MCF 10A (cell line): ENCODE measurements at regions of chr20 and their contacts with region 1.

Region 1: GRCh38 chr20:47379433-47380150 is 23.1 kb upstream of the ZMYND8 start:
- DNase-seq: peak; percentile 63
- H3K4me3 Mint-ChIP-seq: no peak overlapping the region
- H3K27ac Mint-ChIP-seq: no peak overlapping the region
- H3K4me1 Mint-ChIP-seq: peaks cover 14% of the 10 kb centered on the region
- H3K27me3 Mint-ChIP-seq: no peaks in the 10 kb centered on the region
- CTCF ChIP-seq: no peak

Region 2: GRCh38 chr20:46699651-46700359 is 679.8 kb before region 1 on chr20:
- CTCF ChIA-PET with region 1: no interaction called
- POLR2A ChIA-PET with region 1: no interaction called
- intact Hi-C with region 1: no loop called
- DNase-seq: peak; percentile 54
- H3K4me3 Mint-ChIP-seq: no peak overlapping the region
- H3K27ac Mint-ChIP-seq: no peak overlapping the region
- H3K4me1 Mint-ChIP-seq: peaks cover 8% of the 10 kb centered on the region
- H3K27me3 Mint-ChIP-seq: no peaks in the 10 kb centered on the region
- CTCF ChIP-seq: peak; percentile 72

Region 3: DNA sequence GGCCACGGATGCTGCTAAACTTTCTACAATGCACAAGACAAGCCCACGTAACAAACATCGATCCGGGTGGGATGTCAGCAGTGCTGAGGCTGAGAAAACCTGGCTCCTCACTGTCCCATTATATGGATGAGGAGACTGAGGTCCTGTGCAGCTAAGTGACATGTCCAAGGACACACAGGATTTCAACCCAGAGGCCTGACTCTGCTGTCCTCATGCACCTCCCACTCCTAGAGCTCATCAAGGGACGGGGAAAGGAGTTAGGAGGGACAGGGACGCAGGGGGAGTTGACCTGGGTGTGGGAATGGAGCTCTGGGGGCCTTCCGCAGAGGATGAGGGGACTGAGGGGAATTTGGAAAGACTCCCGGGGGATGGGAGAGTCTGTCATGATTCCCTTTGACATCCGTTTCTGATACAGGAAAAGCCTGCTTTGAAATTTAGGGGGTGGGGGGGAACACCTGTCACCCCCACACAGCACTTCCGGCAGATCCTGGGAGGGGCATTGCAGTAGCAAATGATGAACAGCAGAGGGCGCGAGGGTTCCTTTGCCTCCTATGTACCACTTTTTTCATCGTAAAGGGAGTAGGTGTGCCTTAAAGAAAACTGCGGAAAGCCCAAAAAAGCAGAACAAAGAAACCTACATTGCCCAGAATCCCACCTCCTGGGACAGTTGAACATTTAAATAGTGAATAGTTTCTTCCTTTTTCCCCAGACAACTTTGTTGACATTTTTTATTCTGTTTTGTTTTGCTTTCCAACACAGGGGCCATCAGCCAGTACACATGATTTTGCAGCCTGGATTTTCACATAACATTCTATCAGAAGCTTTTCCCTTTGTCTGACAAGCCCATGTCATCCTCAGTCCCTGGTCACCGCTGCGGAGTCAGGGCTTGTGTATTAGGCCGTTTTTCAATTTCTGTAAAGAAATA is 621.6 kb before region 1 on chr20:
- CTCF ChIA-PET with region 1: interaction called, 93 read pairs
- POLR2A ChIA-PET with region 1: interaction called, 5 read pairs
- intact Hi-C with region 1: loop called (anchors 2 kb)
- DNase-seq: peak; percentile 72
- H3K4me3 Mint-ChIP-seq: no peak overlapping the region
- H3K27ac Mint-ChIP-seq: no peak overlapping the region
- H3K4me1 Mint-ChIP-seq: peaks cover under 1% of the 10 kb centered on the region
- H3K27me3 Mint-ChIP-seq: peaks cover 27% of the 10 kb centered on the region
- CTCF ChIP-seq: peak; percentile 93

Region 4: DNA sequence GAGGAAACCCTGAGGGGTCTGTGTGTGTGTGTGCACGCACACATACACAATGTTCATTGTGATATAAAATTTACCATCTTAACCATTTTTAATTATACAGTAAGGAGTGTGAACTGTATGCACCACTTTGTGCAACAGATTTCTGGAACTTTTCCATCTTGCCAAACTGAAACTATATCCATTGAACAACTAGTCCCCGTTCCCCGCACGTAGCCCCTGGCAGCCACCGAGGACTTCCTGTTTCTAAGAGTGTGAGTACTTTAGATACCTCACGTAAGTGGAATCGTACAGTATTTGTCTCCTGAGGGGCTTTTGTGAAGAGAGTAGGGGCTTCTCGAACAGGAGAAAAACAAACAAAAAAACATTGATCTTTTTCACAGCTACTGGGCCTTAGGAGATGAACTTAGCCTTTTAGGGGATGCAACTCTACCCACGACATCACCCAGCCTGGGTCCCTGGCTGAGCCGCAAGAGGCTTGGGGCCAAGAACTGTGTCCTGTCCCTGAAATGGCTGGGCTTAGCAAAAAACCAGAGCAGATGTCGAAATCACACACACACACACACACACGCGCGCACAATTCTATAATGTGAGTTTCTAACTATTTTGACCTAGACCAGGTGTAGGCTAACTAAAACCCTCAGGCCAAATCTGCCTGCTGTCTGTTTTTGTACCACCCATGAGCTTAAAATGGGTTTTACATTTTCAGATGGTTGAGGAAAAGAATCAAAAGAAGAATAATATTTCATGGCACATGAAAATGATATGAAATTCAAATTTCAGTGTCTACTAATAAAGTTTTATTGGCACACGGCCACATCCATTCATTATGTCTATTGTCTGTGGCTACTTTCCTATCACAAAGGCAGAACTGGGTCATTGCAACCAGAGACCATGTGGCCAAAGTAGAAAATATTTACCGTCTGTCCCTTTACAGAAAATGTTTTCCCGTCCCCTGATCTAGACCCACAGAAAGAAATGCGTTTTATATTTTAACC is 340.7 kb before region 1 on chr20:
- CTCF ChIA-PET with region 1: no interaction called
- POLR2A ChIA-PET with region 1: no interaction called
- intact Hi-C with region 1: no loop called
- DNase-seq: no peak
- H3K4me3 Mint-ChIP-seq: no peak overlapping the region
- H3K27ac Mint-ChIP-seq: no peak overlapping the region
- H3K4me1 Mint-ChIP-seq: no peaks in the 10 kb centered on the region
- H3K27me3 Mint-ChIP-seq: no peaks in the 10 kb centered on the region
- CTCF ChIP-seq: no peak

Region 5: GRCh38 chr20:47173596-47174216 is 205.9 kb before region 1 on chr20:
- CTCF ChIA-PET with region 1: no interaction called
- POLR2A ChIA-PET with region 1: no interaction called
- intact Hi-C with region 1: no loop called
- DNase-seq: peak; percentile 3
- H3K4me3 Mint-ChIP-seq: no peak overlapping the region
- H3K27ac Mint-ChIP-seq: no peak overlapping the region
- H3K4me1 Mint-ChIP-seq: no peaks in the 10 kb centered on the region
- H3K27me3 Mint-ChIP-seq: peaks cover 11% of the 10 kb centered on the region
- CTCF ChIP-seq: no peak

Region 6: DNA sequence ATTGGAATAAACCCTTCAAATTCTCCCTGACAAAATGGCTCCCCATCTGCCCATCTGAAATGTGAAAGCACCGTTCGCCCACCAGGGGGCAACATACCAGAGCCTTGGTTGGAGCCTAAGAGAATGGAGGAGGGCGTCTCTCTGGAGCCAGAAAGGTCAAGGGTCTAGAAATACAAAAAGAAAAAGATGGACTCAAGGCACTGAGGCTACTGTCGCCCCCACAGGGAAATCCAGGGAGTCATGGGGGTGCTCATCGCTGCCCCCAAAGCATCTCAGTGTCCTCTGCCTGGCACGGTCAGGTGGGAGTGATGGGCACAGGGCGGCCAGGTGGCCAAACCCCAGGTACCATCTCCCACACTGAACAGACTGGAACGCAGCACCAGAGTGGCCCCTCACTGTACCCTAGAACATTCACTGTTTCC is 159.4 kb before region 1 on chr20:
- CTCF ChIA-PET with region 1: interaction called, 30 read pairs
- POLR2A ChIA-PET with region 1: interaction called, 3 read pairs
- intact Hi-C with region 1: no loop called
- DNase-seq: peak; percentile 54
- H3K4me3 Mint-ChIP-seq: no peak overlapping the region
- H3K27ac Mint-ChIP-seq: no peak overlapping the region
- H3K4me1 Mint-ChIP-seq: peaks cover 5% of the 10 kb centered on the region
- H3K27me3 Mint-ChIP-seq: no peaks in the 10 kb centered on the region
- CTCF ChIP-seq: peak; percentile 41

Region 7: GRCh38 chr20:47281376-47281775 is 98.2 kb before region 1 on chr20:
- CTCF ChIA-PET with region 1: interaction called, 581 read pairs
- POLR2A ChIA-PET with region 1: interaction called, 135 read pairs
- intact Hi-C with region 1: no loop called
- DNase-seq: no peak
- H3K4me3 Mint-ChIP-seq: no peak overlapping the region
- H3K27ac Mint-ChIP-seq: peak overlapping the region; percentile 80
- H3K4me1 Mint-ChIP-seq: peaks cover 26% of the 10 kb centered on the region
- H3K27me3 Mint-ChIP-seq: no peaks in the 10 kb centered on the region
- CTCF ChIP-seq: no peak

Region 8: DNA sequence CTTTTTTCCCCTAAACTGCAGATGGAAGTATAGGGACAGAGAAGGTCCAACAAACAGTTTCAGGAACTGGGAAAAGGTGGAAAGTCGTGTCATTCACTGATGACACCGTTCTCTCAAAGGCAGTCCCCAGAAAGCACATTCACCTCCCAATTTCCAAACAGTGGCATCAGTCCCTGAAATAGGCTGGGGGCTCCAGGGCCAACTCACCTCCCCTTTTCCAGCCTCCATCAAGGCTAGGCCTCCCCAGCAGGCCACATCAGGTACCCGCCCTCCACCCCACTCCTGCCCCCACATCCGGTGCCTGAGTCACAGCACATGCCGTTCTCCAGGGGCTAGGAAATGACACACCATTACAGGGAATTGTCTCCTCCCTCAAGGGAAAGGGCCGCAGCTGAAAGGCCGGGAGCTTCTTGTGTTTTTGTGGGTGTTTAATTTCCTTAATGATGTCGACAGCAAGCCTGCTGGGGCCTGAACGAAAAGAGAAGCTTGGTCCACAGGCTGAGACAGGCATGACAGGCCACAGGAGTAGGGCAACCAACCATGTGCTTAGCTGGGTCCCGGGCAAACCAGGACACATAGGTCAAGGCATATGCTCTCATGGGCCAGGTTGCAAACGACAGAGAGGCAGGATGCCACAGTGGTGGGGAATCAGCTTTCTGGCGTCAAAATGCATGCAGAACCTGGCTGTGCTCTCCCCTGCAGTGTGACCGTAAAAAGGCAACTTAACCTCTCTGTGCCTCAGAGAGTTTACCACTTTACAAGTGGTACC is 62.3 kb before region 1 on chr20:
- CTCF ChIA-PET with region 1: interaction called, 31 read pairs
- POLR2A ChIA-PET with region 1: interaction called, 53 read pairs
- intact Hi-C with region 1: loop called (anchors 5 kb)
- DNase-seq: peak; percentile 100
- H3K4me3 Mint-ChIP-seq: peak overlapping the region; percentile 65
- H3K27ac Mint-ChIP-seq: peak overlapping the region; percentile 94
- H3K4me1 Mint-ChIP-seq: peaks cover 65% of the 10 kb centered on the region
- H3K27me3 Mint-ChIP-seq: no peaks in the 10 kb centered on the region
- CTCF ChIP-seq: no peak

Region 9: DNA sequence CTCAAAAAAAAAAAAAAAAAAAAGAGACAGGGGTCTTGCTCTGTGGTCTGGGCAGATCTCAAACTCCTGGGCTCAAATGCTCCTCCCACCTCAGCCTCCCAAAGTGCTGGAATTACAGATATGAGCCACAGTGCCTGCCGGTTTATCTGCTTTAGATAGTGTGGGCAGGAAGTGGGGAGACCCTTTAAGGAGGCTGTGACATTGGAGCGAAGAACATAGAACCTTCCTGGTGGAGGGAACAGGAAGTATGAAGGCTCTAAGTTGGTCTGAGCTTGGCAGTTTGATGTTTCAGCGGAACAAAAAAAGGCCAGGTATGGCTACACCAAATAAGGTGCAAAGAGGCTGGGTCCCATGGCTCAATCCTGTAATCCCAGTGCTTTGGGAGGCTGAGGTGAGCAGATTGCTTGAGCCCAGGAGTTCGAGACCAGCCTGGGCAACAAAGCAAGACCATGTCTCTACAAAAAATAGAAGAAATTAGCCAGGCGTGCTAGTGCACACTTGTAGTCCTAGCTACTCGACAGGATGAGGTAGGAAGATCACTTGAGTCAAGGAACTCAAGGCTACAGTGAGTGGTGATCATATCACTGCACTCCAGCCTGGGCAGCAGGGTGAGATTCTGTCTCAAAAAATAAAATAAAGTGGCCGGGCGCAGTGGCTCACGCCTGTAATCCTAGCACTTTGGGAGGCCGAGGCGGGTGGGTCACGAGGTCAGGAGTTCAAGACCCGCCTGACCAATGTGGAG is 14.4 kb before region 1 on chr20:
- CTCF ChIA-PET with region 1: interaction called, 82 read pairs
- POLR2A ChIA-PET with region 1: interaction called, 307 read pairs
- intact Hi-C with region 1: no loop called
- DNase-seq: no peak
- H3K4me3 Mint-ChIP-seq: no peak overlapping the region
- H3K27ac Mint-ChIP-seq: no peak overlapping the region
- H3K4me1 Mint-ChIP-seq: peaks cover 24% of the 10 kb centered on the region
- H3K27me3 Mint-ChIP-seq: no peaks in the 10 kb centered on the region
- CTCF ChIP-seq: no peak

Region 10: GRCh38 chr20:47453142-47453782 is 73.7 kb after region 1 on chr20:
- CTCF ChIA-PET with region 1: interaction called, 20 read pairs
- POLR2A ChIA-PET with region 1: interaction called, 9 read pairs
- intact Hi-C with region 1: no loop called
- DNase-seq: peak; percentile 92
- H3K4me3 Mint-ChIP-seq: peak overlapping the region; percentile 45
- H3K27ac Mint-ChIP-seq: peak overlapping the region; percentile 91
- H3K4me1 Mint-ChIP-seq: peaks cover 27% of the 10 kb centered on the region
- H3K27me3 Mint-ChIP-seq: no peaks in the 10 kb centered on the region
- CTCF ChIP-seq: no peak

Region 11: DNA sequence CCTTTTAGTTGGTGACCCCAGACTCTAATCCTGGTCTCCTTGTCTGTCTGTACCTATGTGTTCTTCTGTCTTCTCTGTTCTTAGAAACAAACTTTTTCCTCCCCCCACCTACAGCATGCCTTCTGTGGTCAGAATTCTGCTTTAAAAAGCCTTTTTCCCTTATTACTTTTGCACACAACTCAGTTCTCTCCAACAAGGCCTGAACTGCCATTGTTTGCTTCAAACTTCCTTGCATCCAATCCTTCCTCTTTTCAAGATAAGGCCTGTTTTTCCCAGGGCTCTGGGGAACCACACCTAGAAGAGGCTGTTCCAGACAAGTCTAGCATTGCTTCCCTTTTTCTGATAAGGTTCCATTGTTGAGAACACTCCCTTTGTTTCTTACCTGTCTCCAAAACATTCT is 99.9 kb after region 1 on chr20:
- CTCF ChIA-PET with region 1: no interaction called
- POLR2A ChIA-PET with region 1: no interaction called
- intact Hi-C with region 1: no loop called
- DNase-seq: no peak
- H3K4me3 Mint-ChIP-seq: no peak overlapping the region
- H3K27ac Mint-ChIP-seq: no peak overlapping the region
- H3K4me1 Mint-ChIP-seq: peaks cover 10% of the 10 kb centered on the region
- H3K27me3 Mint-ChIP-seq: no peaks in the 10 kb centered on the region
- CTCF ChIP-seq: no peak